Right cardiac atrium (tissue), 5 donors: ENCODE measurements at regions of chr15 and their contacts with region 1.

Region 1: GRCh38 chr15:34708422-34708821 is 46.4 kb downstream of the GJD2 start:
- DNase-seq: no peak
- ATAC-seq: peak; percentile 75 to 81
- H3K4me3 ChIP-seq: no peak overlapping the region
- H3K27ac ChIP-seq: no peak overlapping the region
- H3K4me1 ChIP-seq: no peaks in the 10 kb centered on the region
- H3K27me3 ChIP-seq: peaks cover 3% of the 10 kb centered on the region

Region 2: DNA sequence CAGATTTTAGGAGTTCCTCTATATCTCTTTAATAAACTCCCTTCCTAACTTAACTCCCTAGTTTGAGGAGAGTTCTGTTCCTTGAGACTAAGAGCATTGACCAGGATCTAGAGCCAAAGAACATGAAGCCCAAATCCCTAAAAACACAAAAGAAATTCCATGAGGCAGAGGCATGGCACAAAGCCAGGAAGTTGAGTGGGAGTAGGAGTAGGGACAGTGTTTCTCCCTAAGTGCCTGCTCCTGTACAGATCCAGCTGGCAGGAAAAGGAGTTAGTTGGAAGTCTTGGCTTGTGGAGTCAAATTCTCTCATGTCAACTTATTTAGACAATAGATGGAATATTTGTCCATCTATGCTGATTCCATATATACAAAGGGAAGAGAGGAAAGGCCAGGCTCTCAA is 75.6 kb after region 1 on chr15:
- intact Hi-C with region 1: loop called in 1 of 4 experiments (anchors 10 kb)
- DNase-seq: no peak
- ATAC-seq: no peak
- H3K4me3 ChIP-seq: no peak overlapping the region
- H3K27ac ChIP-seq: no peak overlapping the region
- H3K4me1 ChIP-seq: no peaks in the 10 kb centered on the region
- H3K27me3 ChIP-seq: no peaks in the 10 kb centered on the region

Region 3: DNA sequence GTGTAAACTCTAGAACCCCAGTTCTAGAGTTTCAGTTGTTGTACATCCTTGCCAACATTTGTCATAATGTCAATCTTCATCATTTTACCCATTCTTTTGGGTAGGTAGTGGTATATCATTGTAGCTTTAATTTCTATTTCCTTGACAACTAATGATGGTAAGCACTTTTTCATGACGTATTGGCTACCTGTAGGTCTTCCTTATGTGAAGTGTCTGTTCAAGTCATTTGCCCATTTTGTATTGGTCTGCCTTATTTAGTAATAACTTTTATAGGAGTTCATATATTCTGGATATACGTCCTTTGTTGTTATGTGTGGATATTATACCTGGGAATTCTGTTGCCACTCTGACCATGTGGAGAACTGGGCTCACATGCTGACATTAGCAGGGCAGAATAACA is 160.7 kb after region 1 on chr15:
- intact Hi-C with region 1: no loop called
- DNase-seq: no peak
- ATAC-seq: no peak
- H3K4me3 ChIP-seq: no peak overlapping the region
- H3K27ac ChIP-seq: no peak overlapping the region
- H3K4me1 ChIP-seq: no peaks in the 10 kb centered on the region
- H3K27me3 ChIP-seq: no peaks in the 10 kb centered on the region

Region 4: GRCh38 chr15:34914317-34914716 is 205.9 kb after region 1 on chr15:
- intact Hi-C with region 1: loop called in 2 of 4 experiments (anchors 5 to 10 kb)
- DNase-seq: no peak
- ATAC-seq: no peak
- H3K4me3 ChIP-seq: no peak overlapping the region
- H3K27ac ChIP-seq: no peak overlapping the region
- H3K4me1 ChIP-seq: no peaks in the 10 kb centered on the region
- H3K27me3 ChIP-seq: no peaks in the 10 kb centered on the region

Region 5: GRCh38 chr15:34927726-34928125 is 219.3 kb after region 1 on chr15:
- intact Hi-C with region 1: loop called in 2 of 4 experiments (anchors 5 kb)
- DNase-seq: no peak
- ATAC-seq: no peak
- H3K4me3 ChIP-seq: no peak overlapping the region
- H3K27ac ChIP-seq: no peak overlapping the region
- H3K4me1 ChIP-seq: no peaks in the 10 kb centered on the region
- H3K27me3 ChIP-seq: no peaks in the 10 kb centered on the region